Psoas muscle (tissue), 8 donors: ENCODE measurements at regions of chr9 and their contacts with region 1.

Region 1: GRCh38 chr9:134738869-134739659 is 97.5 kb downstream of the COL5A1 start:
- DNase-seq: peak; percentile 73 to 87
- ATAC-seq: peak; percentile 61 to 69 (median 64)
- H3K4me3 ChIP-seq: no peak overlapping the region
- H3K27ac ChIP-seq: no peak overlapping the region
- H3K4me1 ChIP-seq: no peaks in the 10 kb centered on the region
- H3K27me3 ChIP-seq: peaks cover 0 to 61% (median 2%) of the 10 kb centered on the region in 3 donors
- CTCF ChIP-seq: peak; percentile 80

Region 2: DNA sequence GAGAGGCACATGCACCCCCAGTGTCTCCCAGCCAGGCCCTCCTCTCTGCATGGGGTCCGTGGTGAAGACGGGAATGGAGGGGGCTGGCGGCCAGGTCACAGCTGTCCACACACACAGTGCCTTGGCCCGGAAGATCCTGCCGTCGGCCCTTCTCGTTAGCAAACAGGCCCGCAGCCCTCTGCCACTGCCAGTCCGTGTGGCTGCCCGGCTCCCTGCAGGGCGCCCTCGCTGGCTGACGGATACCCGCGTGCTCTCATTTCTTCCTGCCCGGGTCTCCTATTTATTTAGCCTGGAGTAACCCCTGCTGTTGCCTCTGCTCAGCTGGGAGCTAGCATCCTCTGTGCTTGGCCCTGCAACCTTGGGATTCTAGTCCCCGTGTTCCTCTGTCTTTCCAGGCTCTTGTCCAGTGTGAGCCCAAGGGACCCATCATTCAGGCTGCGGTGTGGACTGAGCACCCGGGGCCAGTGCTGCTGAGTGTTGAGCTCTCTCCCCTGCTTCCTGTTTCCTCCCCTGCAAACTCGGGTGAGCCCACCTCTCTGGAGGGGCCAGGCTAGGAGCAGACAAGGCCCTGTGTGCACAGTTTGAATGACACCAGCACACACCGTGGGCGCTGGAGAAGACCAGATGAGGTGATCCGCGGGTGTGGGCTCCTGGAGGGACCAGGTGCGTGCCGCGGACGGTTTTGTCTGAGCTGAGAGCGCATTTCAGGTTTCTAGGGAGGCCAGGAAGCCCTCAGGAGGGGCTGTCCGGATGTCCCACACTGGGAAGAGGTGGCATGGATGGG is 560.1 kb before region 1 on chr9:
- intact Hi-C with region 1: loop called (anchors 10 kb)
- DNase-seq: peak; percentile 80 to 89
- ATAC-seq: peak; percentile 24 to 51 (median 46)
- H3K4me3 ChIP-seq: no peak overlapping the region
- H3K27ac ChIP-seq: no peak overlapping the region
- H3K4me1 ChIP-seq: peaks cover 11% of the 10 kb centered on the region
- H3K27me3 ChIP-seq: no peaks in the 10 kb centered on the region
- CTCF ChIP-seq: no peak

Region 3: GRCh38 chr9:134449221-134449894 is 289.7 kb before region 1 on chr9:
- intact Hi-C with region 1: loop called (anchors 1 to 5 kb)
- DNase-seq: peak; percentile 90 to 94
- ATAC-seq: peak; percentile 88 to 93 (median 92)
- H3K4me3 ChIP-seq: no peak overlapping the region
- H3K27ac ChIP-seq: no peak overlapping the region
- H3K4me1 ChIP-seq: no peaks in the 10 kb centered on the region
- H3K27me3 ChIP-seq: no peaks in the 10 kb centered on the region
- CTCF ChIP-seq: peak; percentile 82

Region 4: GRCh38 chr9:134455934-134456739 is 282.9 kb before region 1 on chr9:
- intact Hi-C with region 1: loop called in 1 of 2 experiments (anchors 5 kb)
- DNase-seq: peak; percentile 85 to 89
- ATAC-seq: peak; percentile 72 to 84 (median 72)
- H3K4me3 ChIP-seq: peak overlapping the region; percentile 53
- H3K27ac ChIP-seq: peak overlapping the region; percentile 80
- H3K4me1 ChIP-seq: peaks cover 16% of the 10 kb centered on the region
- H3K27me3 ChIP-seq: no peaks in the 10 kb centered on the region
- CTCF ChIP-seq: no peak

Region 5: GRCh38 chr9:134698587-134699342 is 40.3 kb before region 1 on chr9:
- intact Hi-C with region 1: loop called (anchors 2 to 5 kb)
- DNase-seq: peak; percentile 63 to 83
- ATAC-seq: peak; percentile 64 to 77 (median 70)
- H3K4me3 ChIP-seq: no peak overlapping the region
- H3K27ac ChIP-seq: no peak overlapping the region
- H3K4me1 ChIP-seq: no peaks in the 10 kb centered on the region
- H3K27me3 ChIP-seq: peaks cover 0 to 18% (median 9%) of the 10 kb centered on the region in 3 donors
- CTCF ChIP-seq: peak; percentile 74